Caco-2 (cell line): ENCODE measurements at regions of chr10 and their contacts with region 1.

Region 1: DNA sequence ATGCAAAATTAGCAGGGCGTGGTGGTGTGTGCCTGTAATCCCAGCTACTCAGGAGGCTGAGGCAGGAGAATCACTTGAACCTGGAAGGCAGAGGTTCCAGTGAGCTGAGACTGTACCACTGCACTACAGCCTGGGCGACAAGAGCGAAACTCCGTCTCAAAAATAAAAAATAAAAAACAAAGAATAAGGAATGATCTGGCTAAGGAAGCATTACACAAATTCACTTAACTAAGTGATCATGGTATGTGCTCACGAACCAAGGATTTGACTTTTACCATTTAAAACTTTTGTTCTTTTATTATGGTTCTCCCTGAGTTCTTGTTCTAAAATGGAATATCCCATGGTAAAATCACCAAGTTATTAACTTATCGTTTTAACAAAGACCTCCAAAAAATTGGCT is 71.2 kb downstream of the SIRT1 start:
- DNase-seq: no peak
- H3K4me3 ChIP-seq: no peak overlapping the region
- H3K4me3 Mint-ChIP-seq: no peak overlapping the region
- H3K27ac Mint-ChIP-seq: no peak overlapping the region
- H3K4me1 ChIP-seq: no peaks in the 10 kb centered on the region
- H3K4me1 Mint-ChIP-seq: no peaks in the 10 kb centered on the region
- H3K27me3 ChIP-seq: no peaks in the 10 kb centered on the region
- H3K27me3 Mint-ChIP-seq: no peaks in the 10 kb centered on the region
- CTCF ChIP-seq: no peak

Region 2: GRCh38 chr10:67926951-67927350 is 28.7 kb before region 1 on chr10:
- CTCF ChIA-PET with region 1: no interaction called
- POLR2A ChIA-PET with region 1: no interaction called
- intact Hi-C with region 1: no loop called
- DNase-seq: no peak
- H3K4me3 ChIP-seq: no peak overlapping the region
- H3K4me3 Mint-ChIP-seq: no peak overlapping the region
- H3K27ac Mint-ChIP-seq: no peak overlapping the region
- H3K4me1 ChIP-seq: no peaks in the 10 kb centered on the region
- H3K4me1 Mint-ChIP-seq: no peaks in the 10 kb centered on the region
- H3K27me3 ChIP-seq: no peaks in the 10 kb centered on the region
- H3K27me3 Mint-ChIP-seq: no peaks in the 10 kb centered on the region
- CTCF ChIP-seq: no peak

Region 3: GRCh38 chr10:68249297-68249696 is 293.7 kb after region 1 on chr10:
- CTCF ChIA-PET with region 1: no interaction called
- POLR2A ChIA-PET with region 1: interaction called, 10 read pairs
- intact Hi-C with region 1: no loop called
- DNase-seq: no peak
- H3K4me3 ChIP-seq: no peak overlapping the region
- H3K4me3 Mint-ChIP-seq: no peak overlapping the region
- H3K27ac Mint-ChIP-seq: no peak overlapping the region
- H3K4me1 ChIP-seq: no peaks in the 10 kb centered on the region
- H3K4me1 Mint-ChIP-seq: no peaks in the 10 kb centered on the region
- H3K27me3 ChIP-seq: no peaks in the 10 kb centered on the region
- H3K27me3 Mint-ChIP-seq: peaks cover 2% of the 10 kb centered on the region
- CTCF ChIP-seq: no peak

Region 4: DNA sequence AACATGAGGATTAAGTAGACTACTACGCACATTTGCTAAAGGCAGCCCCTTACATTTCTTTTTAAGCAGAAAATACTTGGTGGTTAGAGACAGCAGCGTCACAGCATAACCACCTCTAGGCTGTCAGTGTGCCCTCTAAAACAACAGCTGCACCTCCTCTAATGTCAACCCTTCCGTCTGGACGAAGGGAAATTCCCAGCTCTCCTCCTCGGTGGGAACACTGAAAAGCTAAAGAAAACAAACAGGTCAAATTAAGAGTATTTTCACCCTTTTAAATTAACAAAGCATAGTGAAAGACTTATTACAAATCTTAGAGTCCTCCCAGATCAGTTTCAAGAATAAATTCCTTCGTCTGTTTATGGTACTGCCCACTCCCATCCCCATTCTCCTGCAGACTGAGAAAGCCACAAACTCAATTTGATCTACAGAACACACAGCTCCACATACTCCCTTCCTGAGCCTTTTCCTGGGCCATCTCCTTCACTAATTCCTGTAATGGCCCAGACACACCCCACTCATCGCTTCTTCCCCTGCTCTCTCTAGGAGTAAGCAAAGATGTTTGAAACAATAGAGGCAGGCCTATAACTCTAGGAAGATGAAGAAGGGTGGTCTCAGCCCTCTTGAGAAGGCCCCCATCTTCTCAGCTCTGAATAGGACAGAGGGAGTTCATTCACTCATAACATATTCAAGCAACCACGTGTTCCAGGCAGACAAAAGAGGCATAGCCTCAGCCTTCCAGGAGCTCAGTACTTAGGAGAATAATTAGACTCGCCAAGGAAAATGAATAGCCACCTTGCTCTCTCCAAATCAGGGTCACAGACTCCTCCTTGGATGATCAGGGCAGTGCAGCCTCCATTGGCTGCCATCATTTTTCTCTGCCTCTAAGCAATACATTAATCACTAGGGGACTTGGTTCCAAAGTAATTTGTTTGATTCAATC is 328.7 kb after region 1 on chr10:
- CTCF ChIA-PET with region 1: no interaction called
- POLR2A ChIA-PET with region 1: no interaction called
- intact Hi-C with region 1: no loop called
- DNase-seq: no peak
- H3K4me3 ChIP-seq: no peak overlapping the region
- H3K4me3 Mint-ChIP-seq: no peak overlapping the region
- H3K27ac Mint-ChIP-seq: no peak overlapping the region
- H3K4me1 ChIP-seq: no peaks in the 10 kb centered on the region
- H3K4me1 Mint-ChIP-seq: no peaks in the 10 kb centered on the region
- H3K27me3 ChIP-seq: no peaks in the 10 kb centered on the region
- H3K27me3 Mint-ChIP-seq: no peaks in the 10 kb centered on the region
- CTCF ChIP-seq: no peak